ENCODE measurements at regions of chr10 and their contacts with region 1.

Region 1: GRCh38 chr10:29895456-29895855 is 163.9 kb downstream of the JCAD start:
- DNase-seq: peak; percentile 98
- H3K4me3 ChIP-seq: peak overlapping the region in 1 of 3 experiments; percentile 19
- H3K27ac ChIP-seq: peak overlapping the region; percentile 83
- H3K4me1 ChIP-seq: peaks cover 14% of the 10 kb centered on the region
- H3K27me3 ChIP-seq: no peaks in the 10 kb centered on the region
- CTCF ChIP-seq: no peak
- POLR2A ChIP-seq: peak; percentile 35

Region 2: GRCh38 chr10:29804025-29804852 is 91.2 kb before region 1 on chr10:
- CTCF ChIA-PET with region 1: interaction called, 12 read pairs
- POLR2A ChIA-PET with region 1: interaction called, 3 read pairs
- dilution Hi-C with region 1: no loop called
- intact Hi-C with region 1: no loop called
- DNase-seq: peak; percentile 99
- H3K4me3 ChIP-seq: peak overlapping the region in 1 of 3 experiments; percentile 31
- H3K27ac ChIP-seq: peak overlapping the region; percentile 99
- H3K4me1 ChIP-seq: peaks cover 54% of the 10 kb centered on the region
- H3K27me3 ChIP-seq: no peaks in the 10 kb centered on the region
- CTCF ChIP-seq: no peak
- POLR2A ChIP-seq: no peak

Region 3: DNA sequence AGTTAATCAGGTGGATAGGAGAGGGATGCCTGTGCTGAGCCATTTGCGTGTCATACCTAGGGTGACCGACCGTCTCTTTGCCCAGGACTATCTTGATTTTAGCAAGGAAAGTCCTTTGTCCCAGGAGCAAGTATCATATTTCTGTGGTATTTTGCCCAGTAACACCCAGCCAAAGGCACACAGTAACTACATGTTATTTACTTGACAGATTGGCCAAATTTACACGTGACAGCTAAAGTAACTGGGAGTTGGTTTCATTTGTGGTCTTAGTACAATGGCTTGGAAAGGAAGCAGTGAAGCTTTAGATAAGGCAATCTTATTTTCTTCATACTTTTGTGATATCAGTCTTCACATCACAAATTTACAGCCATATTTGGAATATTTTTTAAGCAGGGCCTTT is 21.9 kb after region 1 on chr10:
- CTCF ChIA-PET with region 1: interaction called, 10 read pairs
- POLR2A ChIA-PET with region 1: no interaction called
- dilution Hi-C with region 1: no loop called
- intact Hi-C with region 1: no loop called
- DNase-seq: peak; percentile 84
- H3K4me3 ChIP-seq: no peak overlapping the region
- H3K27ac ChIP-seq: no peak overlapping the region
- H3K4me1 ChIP-seq: no peaks in the 10 kb centered on the region
- H3K27me3 ChIP-seq: peaks cover 3 to 11% of the 10 kb centered on the region in 2 experiments
- CTCF ChIP-seq: no peak
- POLR2A ChIP-seq: no peak